IMR-90 (cell line): ENCODE measurements at regions of chr12 and their contacts with region 1.

Region 1: DNA sequence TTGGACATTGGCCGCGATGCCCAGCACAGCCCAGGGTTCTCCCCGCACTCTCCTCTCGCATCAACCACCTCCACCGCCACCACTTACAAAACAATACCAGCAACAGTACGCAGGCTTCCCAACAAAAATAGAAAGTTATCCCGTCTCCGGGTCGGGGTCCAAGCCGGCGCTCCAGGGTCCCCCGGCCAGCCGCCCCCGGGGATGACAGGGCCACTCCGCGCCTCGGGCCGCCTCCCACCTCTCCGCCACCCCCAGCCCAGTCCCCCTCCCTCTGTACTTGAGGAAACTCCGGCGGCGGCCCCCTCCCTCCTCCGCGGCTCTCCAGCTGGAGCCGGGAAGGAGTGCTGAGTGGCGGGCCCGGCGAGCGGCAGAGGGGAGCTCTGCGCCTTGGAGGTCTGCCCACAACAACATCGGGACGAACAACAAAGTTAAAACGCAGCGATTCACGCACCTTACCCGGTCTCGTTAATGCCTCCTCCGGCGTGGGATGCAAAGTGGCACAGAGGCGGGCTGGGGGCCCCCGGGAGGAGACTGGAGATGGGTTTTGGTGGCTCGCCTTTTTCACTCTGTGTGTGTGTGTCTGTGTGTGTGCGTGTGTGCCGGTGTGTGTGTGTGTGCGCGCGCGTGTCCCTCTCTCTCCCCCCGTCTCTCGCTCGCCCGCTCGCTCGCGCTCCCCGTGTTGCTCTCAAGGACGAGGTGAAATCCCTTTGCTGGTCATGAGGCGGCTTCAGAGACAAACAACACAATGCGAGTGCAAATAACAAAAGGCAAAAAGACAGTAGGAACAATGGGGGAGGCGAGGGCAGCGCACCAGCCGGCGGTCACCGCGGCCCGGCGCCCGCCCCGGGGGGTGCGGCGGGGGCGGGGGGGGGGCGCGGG is 386.8 kb downstream of the BCAT1 start:
- DNase-seq: peak; percentile 62
- ATAC-seq: peak; percentile 63
- H3K4me3 ChIP-seq: peak overlapping the region; percentile 98
- H3K27ac ChIP-seq: peak overlapping the region; percentile 98
- H3K4me1 ChIP-seq: peaks cover 5% of the 10 kb centered on the region; the same call in 1 of the 2 replicates
- H3K27me3 ChIP-seq: no peaks in the 10 kb centered on the region
- CTCF ChIP-seq: no peak
- POLR2A ChIP-seq: no peak
- RAD21 ChIP-seq: peak; percentile 11; the same call in 1 of the 2 replicates

Region 2: GRCh38 chr12:23204933-23205778 is 1357.0 kb before region 1 on chr12:
- CTCF ChIA-PET with region 1: no interaction called
- POLR2A ChIA-PET with region 1: no interaction called
- dilution Hi-C with region 1: no loop called
- in situ Hi-C with region 1: no loop called
- intact Hi-C with region 1: loop called (anchors 10 kb)
- DNase-seq: peak; percentile 67
- ATAC-seq: peak; percentile 93
- H3K4me3 ChIP-seq: no peak overlapping the region
- H3K27ac ChIP-seq: no peak overlapping the region
- H3K4me1 ChIP-seq: no peaks in the 10 kb centered on the region
- H3K27me3 ChIP-seq: no peaks in the 10 kb centered on the region
- CTCF ChIP-seq: peak; percentile 78
- POLR2A ChIP-seq: no peak
- RAD21 ChIP-seq: peak; percentile 80

Region 3: DNA sequence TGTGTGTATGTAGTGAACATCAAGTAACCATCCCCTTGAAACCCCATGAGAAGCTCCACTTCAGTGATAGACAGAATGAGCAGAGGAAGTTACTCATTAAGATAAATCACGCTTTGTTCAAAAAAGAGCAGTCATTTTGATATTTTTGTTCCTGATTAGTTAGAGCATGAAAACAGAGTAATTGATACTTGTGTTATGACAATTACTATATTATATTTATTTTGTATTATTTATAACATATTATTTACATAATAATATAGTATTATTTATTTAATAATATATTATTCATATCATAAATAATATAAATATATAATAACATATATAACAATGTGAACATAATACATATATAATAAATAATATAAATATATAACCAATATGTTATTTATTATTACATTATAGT is 1193.5 kb before region 1 on chr12:
- CTCF ChIA-PET with region 1: no interaction called
- POLR2A ChIA-PET with region 1: no interaction called
- dilution Hi-C with region 1: no loop called
- in situ Hi-C with region 1: no loop called
- intact Hi-C with region 1: no loop called
- DNase-seq: no peak
- ATAC-seq: no peak
- H3K4me3 ChIP-seq: no peak overlapping the region
- H3K27ac ChIP-seq: no peak overlapping the region
- H3K4me1 ChIP-seq: no peaks in the 10 kb centered on the region
- H3K27me3 ChIP-seq: no peaks in the 10 kb centered on the region
- CTCF ChIP-seq: no peak
- POLR2A ChIP-seq: no peak
- RAD21 ChIP-seq: no peak

Region 4: DNA sequence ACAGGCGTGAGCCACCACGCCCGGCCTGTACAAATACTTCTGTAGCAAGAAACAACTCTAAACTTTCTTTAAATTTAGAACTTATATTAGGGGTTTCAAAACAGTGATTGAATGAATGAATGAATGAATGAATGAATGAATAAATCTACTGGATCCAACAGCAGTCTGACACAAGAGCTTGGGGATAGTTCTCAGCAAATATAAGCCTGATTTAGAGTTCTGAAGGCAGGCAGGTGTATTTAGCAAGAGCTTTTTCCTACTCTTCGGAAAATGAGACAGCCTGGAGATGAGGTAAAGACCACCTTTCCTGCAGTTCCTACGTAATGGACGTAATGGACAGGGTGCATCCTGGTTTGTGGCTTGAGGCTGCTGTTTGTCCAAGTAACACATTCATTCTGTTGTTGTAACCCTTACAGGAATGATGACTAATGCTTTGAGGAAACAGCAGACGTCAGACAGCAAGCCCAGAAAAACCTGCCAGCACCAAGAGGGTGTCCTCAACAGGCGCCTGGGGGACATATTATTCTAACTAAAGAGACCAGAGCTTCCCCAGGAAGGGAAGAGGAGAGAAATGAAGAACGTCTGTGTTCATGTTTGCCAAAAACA is 335.3 kb before region 1 on chr12:
- CTCF ChIA-PET with region 1: no interaction called
- POLR2A ChIA-PET with region 1: no interaction called
- dilution Hi-C with region 1: no loop called
- in situ Hi-C with region 1: no loop called
- intact Hi-C with region 1: loop called (anchors 5 kb)
- DNase-seq: peak; percentile 91
- ATAC-seq: peak; percentile 84
- H3K4me3 ChIP-seq: no peak overlapping the region
- H3K27ac ChIP-seq: no peak overlapping the region
- H3K4me1 ChIP-seq: peaks cover 12% of the 10 kb centered on the region
- H3K27me3 ChIP-seq: no peaks in the 10 kb centered on the region
- CTCF ChIP-seq: no peak
- POLR2A ChIP-seq: no peak
- RAD21 ChIP-seq: no peak

Region 5: DNA sequence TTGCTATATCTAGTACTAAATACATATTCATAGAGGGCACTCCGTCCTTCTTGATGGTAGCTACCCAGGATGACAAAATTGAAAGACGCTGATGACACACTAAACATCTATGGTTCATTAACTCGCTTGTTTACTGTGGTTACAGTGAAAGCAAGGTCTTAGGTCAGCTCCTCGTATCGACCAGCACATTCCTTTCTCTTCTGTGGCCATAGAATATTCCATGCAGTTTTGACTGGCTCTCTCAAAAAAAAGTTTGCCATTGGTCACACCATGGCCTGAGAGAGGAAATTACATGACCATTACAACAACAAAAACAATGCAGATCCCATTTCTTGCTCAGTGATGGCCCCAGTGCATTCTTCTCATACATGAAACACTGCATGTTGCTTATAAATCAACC is 201.2 kb before region 1 on chr12:
- CTCF ChIA-PET with region 1: no interaction called
- POLR2A ChIA-PET with region 1: no interaction called
- dilution Hi-C with region 1: no loop called
- in situ Hi-C with region 1: no loop called
- intact Hi-C with region 1: loop called (anchors 5 kb)
- DNase-seq: peak; percentile 19
- ATAC-seq: peak; percentile 58
- H3K4me3 ChIP-seq: no peak overlapping the region
- H3K27ac ChIP-seq: no peak overlapping the region
- H3K4me1 ChIP-seq: peaks cover 6% of the 10 kb centered on the region
- H3K27me3 ChIP-seq: no peaks in the 10 kb centered on the region
- CTCF ChIP-seq: no peak
- POLR2A ChIP-seq: no peak
- RAD21 ChIP-seq: no peak

Region 6: GRCh38 chr12:24398605-24399004 is 163.5 kb before region 1 on chr12:
- CTCF ChIA-PET with region 1: no interaction called
- POLR2A ChIA-PET with region 1: no interaction called
- dilution Hi-C with region 1: no loop called
- in situ Hi-C with region 1: no loop called
- intact Hi-C with region 1: no loop called
- DNase-seq: peak; percentile 15
- ATAC-seq: no peak
- H3K4me3 ChIP-seq: no peak overlapping the region
- H3K27ac ChIP-seq: no peak overlapping the region
- H3K4me1 ChIP-seq: peaks cover 4% of the 10 kb centered on the region; the same call in 1 of the 2 replicates
- H3K27me3 ChIP-seq: no peaks in the 10 kb centered on the region
- CTCF ChIP-seq: no peak
- POLR2A ChIP-seq: no peak
- RAD21 ChIP-seq: no peak

Region 7: DNA sequence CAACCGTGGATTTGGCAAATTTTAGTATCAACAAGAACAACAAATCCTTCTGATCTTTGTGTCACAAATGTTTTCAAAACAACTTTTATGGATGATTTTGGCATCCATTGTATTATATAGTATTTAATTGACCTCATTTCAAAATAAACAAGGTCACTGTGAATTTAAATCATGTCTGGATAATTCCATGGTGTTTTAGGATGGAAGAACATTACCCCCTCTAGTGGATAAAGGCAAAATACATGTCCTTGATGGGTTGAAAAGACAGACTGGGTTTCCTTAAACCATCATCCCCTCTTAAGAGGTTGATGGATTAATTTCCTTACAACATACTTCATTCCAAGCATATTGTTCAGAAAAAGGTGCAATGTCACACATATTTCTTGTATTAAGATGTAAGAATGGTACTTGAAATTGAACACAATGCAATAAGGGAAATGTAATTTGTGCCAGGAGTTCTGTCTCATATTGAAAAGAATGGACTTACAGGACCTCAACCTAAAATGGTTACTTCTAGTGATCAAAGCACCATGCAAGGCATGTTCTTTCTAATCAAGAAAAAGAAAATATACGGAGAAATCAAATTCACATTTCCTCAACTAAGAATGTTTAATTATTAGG is 34.8 kb after region 1 on chr12:
- CTCF ChIA-PET with region 1: no interaction called
- POLR2A ChIA-PET with region 1: no interaction called
- dilution Hi-C with region 1: no loop called
- in situ Hi-C with region 1: no loop called
- intact Hi-C with region 1: loop called (anchors 2 kb)
- DNase-seq: peak; percentile 58
- ATAC-seq: peak; percentile 76
- H3K4me3 ChIP-seq: no peak overlapping the region
- H3K27ac ChIP-seq: no peak overlapping the region
- H3K4me1 ChIP-seq: no peaks in the 10 kb centered on the region; the same call in 1 of the 2 replicates
- H3K27me3 ChIP-seq: no peaks in the 10 kb centered on the region
- CTCF ChIP-seq: peak; percentile 70
- POLR2A ChIP-seq: no peak
- RAD21 ChIP-seq: peak; percentile 75

Region 8: GRCh38 chr12:24778486-24779304 is 216.6 kb after region 1 on chr12:
- CTCF ChIA-PET with region 1: no interaction called
- POLR2A ChIA-PET with region 1: no interaction called
- dilution Hi-C with region 1: no loop called
- in situ Hi-C with region 1: no loop called
- intact Hi-C with region 1: loop called (anchors 1 kb)
- DNase-seq: peak; percentile 75
- ATAC-seq: peak; percentile 92
- H3K4me3 ChIP-seq: no peak overlapping the region
- H3K27ac ChIP-seq: no peak overlapping the region
- H3K4me1 ChIP-seq: peaks cover 4% of the 10 kb centered on the region; the same call in 1 of the 2 replicates
- H3K27me3 ChIP-seq: no peaks in the 10 kb centered on the region; the same call in 1 of the 2 replicates
- CTCF ChIP-seq: peak; percentile 62
- POLR2A ChIP-seq: no peak
- RAD21 ChIP-seq: peak; percentile 80